ENCODE measurements at regions of chr6 and their contacts with region 1.

Region 1: GRCh38 chr6:167392631-167393316 is 67.9 kb downstream of the TTLL2 start:
- DNase-seq: no peak
- ATAC-seq: no peak
- H3K4me3 ChIP-seq: no peak overlapping the region
- H3K27ac ChIP-seq: no peak overlapping the region
- H3K4me1 ChIP-seq: no peaks in the 10 kb centered on the region
- H3K27me3 ChIP-seq: peaks cover 2% of the 10 kb centered on the region; the same call in 1 of the 2 replicates
- CTCF ChIP-seq: no peak

Region 2: GRCh38 chr6:167350731-167351655 is 41.8 kb before region 1 on chr6:
- CTCF ChIA-PET with region 1: interaction called, 11 read pairs
- POLR2A ChIA-PET with region 1: no interaction called
- in situ Hi-C with region 1: no loop called
- intact Hi-C with region 1: no loop called
- DNase-seq: peak; percentile 61
- ATAC-seq: peak; percentile 94
- H3K4me3 ChIP-seq: peak overlapping the region; percentile 40 to 60
- H3K27ac ChIP-seq: no peak overlapping the region; the same call in 1 of the 2 replicates
- H3K4me1 ChIP-seq: 0 out of 2 replicates have a peak, but pooled peaks cover 4% of the 10 kb centered on the region
- H3K27me3 ChIP-seq: peaks cover 5% of the 10 kb centered on the region; the same call in 1 of the 2 replicates
- CTCF ChIP-seq: peak; percentile 98

Region 3: DNA sequence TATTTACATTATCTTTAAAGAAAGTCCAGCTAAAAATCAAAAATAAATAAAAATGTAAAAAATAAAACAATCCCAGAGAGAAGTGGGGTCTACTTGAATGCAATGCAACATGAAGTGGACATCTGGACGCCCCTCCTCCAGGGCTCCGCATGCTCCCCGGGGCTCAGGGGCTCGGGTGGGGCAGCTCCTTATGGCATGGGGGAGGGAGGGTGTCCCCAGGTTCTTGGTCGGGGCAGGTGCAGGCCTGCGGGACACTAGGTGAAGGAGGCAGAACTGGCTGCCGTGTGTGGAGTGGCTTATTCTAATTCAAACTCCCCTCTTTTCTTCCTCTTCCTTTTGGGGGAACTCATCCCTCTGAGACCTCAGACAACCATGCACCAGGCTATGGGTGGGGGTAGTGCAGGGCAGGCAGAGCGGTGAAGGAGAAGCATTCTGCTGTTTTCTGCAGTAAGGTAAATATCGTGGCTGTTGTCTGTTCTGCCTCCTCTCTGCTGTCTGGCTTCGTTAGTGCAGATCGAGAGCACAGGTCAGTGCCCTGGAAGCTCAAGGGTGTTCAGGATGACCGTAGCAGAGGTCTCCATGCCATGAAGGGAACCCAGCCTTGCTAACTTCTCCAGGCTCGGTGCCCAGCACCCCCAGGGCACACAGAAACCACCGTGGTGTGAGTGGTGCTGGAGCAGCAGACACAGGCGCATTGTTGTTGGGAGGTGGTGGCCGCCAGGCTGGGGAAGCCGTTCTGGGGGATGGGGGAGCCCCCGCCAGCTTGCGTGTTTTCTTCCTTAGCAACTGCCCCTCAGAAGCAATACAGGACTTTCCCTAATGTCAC is 14.7 kb after region 1 on chr6:
- CTCF ChIA-PET with region 1: no interaction called
- POLR2A ChIA-PET with region 1: no interaction called
- in situ Hi-C with region 1: no loop called
- intact Hi-C with region 1: no loop called
- DNase-seq: no peak
- ATAC-seq: no peak
- H3K4me3 ChIP-seq: no peak overlapping the region
- H3K27ac ChIP-seq: no peak overlapping the region
- H3K4me1 ChIP-seq: no peaks in the 10 kb centered on the region
- H3K27me3 ChIP-seq: peaks cover 25% of the 10 kb centered on the region
- CTCF ChIP-seq: no peak

Region 4: GRCh38 chr6:167815296-167816006 is 422.7 kb after region 1 on chr6:
- CTCF ChIA-PET with region 1: no interaction called
- POLR2A ChIA-PET with region 1: no interaction called
- in situ Hi-C with region 1: no loop called
- intact Hi-C with region 1: no loop called
- DNase-seq: no peak
- ATAC-seq: no peak
- H3K4me3 ChIP-seq: no peak overlapping the region
- H3K27ac ChIP-seq: no peak overlapping the region
- H3K4me1 ChIP-seq: no peaks in the 10 kb centered on the region
- H3K27me3 ChIP-seq: no peaks in the 10 kb centered on the region; the same call in 1 of the 2 replicates
- CTCF ChIP-seq: no peak

Measured in Panc1 (cell line).